MCF 10A (cell line): ENCODE measurements at regions of chr5 and their contacts with region 1.

Region 1: GRCh38 chr5:77230721-77231470 is 20.4 kb downstream of the PDE8B start:
- DNase-seq: peak; percentile 20
- H3K4me3 Mint-ChIP-seq: no peak overlapping the region
- H3K27ac Mint-ChIP-seq: no peak overlapping the region
- H3K4me1 Mint-ChIP-seq: no peaks in the 10 kb centered on the region
- H3K27me3 Mint-ChIP-seq: no peaks in the 10 kb centered on the region
- CTCF ChIP-seq: no peak

Region 2: GRCh38 chr5:77218263-77218662 is 12.6 kb before region 1 on chr5:
- CTCF ChIA-PET with region 1: interaction called, 11 read pairs
- POLR2A ChIA-PET with region 1: no interaction called
- intact Hi-C with region 1: no loop called
- DNase-seq: peak; percentile 9
- H3K4me3 Mint-ChIP-seq: no peak overlapping the region
- H3K27ac Mint-ChIP-seq: no peak overlapping the region
- H3K4me1 Mint-ChIP-seq: no peaks in the 10 kb centered on the region
- H3K27me3 Mint-ChIP-seq: peaks cover 14% of the 10 kb centered on the region
- CTCF ChIP-seq: no peak

Region 3: GRCh38 chr5:77426670-77427069 is 195.8 kb after region 1 on chr5:
- CTCF ChIA-PET with region 1: no interaction called
- POLR2A ChIA-PET with region 1: no interaction called
- intact Hi-C with region 1: no loop called
- DNase-seq: no peak
- H3K4me3 Mint-ChIP-seq: no peak overlapping the region
- H3K27ac Mint-ChIP-seq: no peak overlapping the region
- H3K4me1 Mint-ChIP-seq: no peaks in the 10 kb centered on the region
- H3K27me3 Mint-ChIP-seq: no peaks in the 10 kb centered on the region
- CTCF ChIP-seq: no peak